HEK293T (cell line): ENCODE measurements at regions of chr17 and their contacts with region 1.

Region 1: DNA sequence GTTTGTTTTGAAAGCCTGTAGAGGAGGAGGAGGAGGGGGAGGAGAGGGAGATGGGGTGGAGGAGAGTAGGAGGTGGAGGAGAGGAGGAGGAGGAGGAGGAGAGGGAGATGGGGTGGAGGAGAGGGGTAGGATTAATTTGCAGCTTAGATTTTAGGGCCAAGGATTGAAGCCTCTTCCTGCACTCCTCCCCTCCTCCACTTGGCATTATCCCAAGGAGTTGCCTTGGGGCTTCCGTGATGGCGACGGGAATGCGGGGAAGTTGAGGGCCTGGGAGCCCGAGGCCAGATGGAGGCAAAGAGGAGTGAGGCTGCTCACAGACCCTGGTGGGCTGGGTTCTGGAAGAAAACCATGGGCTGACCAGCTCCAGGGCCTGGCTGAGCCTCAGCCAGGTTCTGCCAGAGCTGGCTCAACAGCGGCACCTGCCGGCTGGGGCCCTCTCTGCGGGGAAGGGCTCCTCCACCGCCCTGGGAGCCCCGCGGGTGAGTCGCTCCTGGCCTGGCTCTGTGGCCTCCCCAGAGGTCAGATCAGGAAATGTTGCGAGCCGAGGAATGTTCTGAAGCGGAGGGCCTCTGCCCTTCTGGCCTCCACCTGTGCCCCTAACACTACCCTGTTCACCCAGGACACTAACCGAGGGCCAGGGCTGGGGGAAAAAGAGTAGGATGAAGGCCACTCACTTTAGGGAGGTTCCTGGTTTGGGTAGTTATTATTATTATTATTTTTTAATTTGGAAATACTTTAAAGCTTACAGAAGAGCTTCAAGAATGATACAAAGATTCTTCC is 23.9 kb upstream of the FMNL1 start:
- DNase-seq: peak; percentile 94

Region 2: GRCh38 chr17:45155029-45155428 is 42.7 kb before region 1 on chr17:
- CTCF ChIA-PET with region 1: interaction called, 85 read pairs
- POLR2A ChIA-PET with region 1: interaction called, 117 read pairs
- DNase-seq: no peak

Region 3: DNA sequence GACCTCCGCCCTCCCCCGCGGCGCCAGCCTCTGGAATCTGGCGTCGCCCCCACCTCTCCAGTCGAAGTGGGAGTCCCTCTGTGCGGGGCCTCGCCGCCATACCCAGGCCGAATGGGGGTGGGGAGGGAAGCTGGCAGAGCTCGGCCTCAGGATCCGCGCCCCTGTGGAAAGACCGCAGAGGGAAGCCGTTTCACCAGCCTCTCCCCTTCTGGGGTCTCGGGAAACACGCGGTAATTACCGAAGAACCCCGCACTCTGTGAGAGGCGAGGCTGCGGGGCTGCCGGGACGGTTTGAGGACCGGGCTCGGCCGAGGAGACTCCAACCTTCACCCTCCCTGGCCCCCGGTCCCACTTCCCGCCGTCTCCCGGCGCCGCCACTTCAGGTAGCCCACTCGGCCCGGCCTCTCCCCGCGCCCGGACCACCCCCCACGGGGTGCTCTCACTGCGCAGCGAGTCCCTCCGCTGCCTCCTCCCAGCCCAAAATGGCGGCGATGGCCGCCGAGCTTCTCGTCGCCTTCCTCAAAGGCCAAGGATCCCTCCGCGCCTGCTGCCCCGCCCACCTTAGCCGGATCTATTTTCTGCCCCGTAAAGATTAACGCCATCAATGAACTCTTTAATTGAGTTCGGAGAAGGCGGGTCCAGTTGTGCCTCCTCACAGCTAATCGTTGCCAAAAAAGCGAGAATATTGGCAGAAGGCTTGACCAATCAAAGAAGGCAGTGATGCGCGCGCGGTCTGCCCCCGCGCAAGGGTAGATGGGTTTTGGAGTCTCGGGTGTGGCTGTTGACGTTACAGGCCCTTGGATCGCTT is 36.5 kb before region 1 on chr17:
- CTCF ChIA-PET with region 1: interaction called, 6 read pairs
- POLR2A ChIA-PET with region 1: interaction called, 36 read pairs
- DNase-seq: peak; percentile 95